OCI-LY7 (cell line): ENCODE measurements at regions of chr1 and their contacts with region 1.

Region 1: DNA sequence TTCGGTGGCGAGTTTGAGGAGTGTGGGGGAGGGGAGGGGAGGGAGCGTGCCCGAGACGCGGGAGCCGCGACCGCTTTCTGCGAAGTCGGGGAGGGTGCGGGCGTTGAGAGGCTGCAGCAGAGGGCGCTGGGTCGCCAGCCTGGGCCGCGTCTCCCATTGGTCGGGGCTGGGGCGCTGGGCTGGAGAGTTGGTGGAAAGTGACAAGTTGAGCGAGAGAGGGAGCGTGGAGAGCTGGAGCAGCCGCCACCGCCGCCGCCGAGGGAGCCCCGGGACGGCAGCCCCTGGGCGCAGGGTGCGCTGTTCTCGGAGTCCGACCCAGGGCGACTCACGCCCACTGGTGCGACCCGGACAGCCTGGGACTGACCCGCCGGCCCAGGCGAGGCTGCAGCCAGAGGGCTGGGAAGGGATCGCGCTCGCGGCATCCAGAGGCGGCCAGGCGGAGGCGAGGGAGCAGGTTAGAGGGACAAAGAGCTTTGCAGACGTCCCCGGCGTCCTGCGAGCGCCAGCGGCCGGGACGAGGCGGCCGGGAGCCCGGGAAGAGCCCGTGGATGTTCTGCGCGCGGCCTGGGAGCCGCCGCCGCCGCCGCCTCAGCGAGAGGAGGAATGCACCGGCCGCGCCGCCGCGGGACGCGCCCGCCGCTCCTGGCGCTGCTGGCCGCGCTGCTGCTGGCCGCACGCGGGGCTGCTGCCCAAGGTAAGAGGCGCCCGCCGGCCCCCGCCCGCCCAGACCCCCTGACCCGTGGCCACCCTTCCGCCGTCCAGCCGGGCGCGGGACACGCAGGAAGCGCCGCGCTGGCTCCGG is at the start of gene ROR1:
- DNase-seq: peak; percentile 73
- H3K4me3 ChIP-seq: peak within 1 kb of the TSS; percentile 67
- H3K27ac ChIP-seq: no peak within 1 kb of the TSS
- H3K4me1 ChIP-seq: peaks cover 29% of the 10 kb centered on the region
- CTCF ChIP-seq: peak; percentile 70
- total RNA-seq, gene ROR1: 0.47 and 0.85 TPM in 2 replicates

Region 2: GRCh38 chr1:63691701-63692425 is 82.2 kb before region 1 on chr1:
- CTCF ChIA-PET with region 1: no interaction called
- POLR2A ChIA-PET with region 1: no interaction called
- intact Hi-C with region 1: loop called (anchors 5 kb)
- DNase-seq: peak; percentile 68
- H3K4me3 ChIP-seq: no peak overlapping the region
- H3K27ac ChIP-seq: no peak overlapping the region
- H3K4me1 ChIP-seq: no peaks in the 10 kb centered on the region
- CTCF ChIP-seq: peak; percentile 89

Region 3: GRCh38 chr1:63753591-63753990 is 20.4 kb before region 1 on chr1:
- CTCF ChIA-PET with region 1: no interaction called
- POLR2A ChIA-PET with region 1: no interaction called
- intact Hi-C with region 1: no loop called
- DNase-seq: no peak
- H3K4me3 ChIP-seq: no peak overlapping the region
- H3K27ac ChIP-seq: no peak overlapping the region
- H3K4me1 ChIP-seq: no peaks in the 10 kb centered on the region
- CTCF ChIP-seq: no peak

Region 4: DNA sequence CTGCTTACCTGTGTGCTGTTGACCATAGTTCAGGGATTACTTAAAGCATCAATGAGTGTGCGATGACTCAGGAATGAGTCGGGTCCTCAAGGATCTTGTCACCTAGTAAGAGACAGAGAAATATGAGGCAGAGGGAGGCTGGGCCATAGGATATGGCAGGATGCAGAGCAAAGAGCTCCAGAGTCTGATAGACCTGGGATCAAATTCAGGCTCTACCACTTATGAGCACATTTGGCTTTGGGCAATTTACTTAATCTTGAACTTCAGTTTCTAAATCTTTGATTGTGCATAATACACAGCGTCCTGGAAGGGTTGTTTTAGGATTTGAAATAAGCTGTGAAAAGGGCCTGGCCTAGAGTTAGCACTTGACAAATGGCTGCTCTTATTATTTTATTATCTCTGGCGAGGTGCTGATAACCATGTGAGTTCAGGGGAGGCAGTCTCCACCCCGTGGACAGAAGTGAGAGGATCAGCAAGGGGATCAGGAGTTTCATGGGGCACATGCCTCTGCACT is 94.3 kb after region 1 on chr1:
- CTCF ChIA-PET with region 1: no interaction called
- POLR2A ChIA-PET with region 1: interaction called, 4 read pairs
- intact Hi-C with region 1: loop called (anchors 5 kb)
- DNase-seq: peak; percentile 24
- H3K4me3 ChIP-seq: no peak overlapping the region
- H3K27ac ChIP-seq: no peak overlapping the region
- H3K4me1 ChIP-seq: no peaks in the 10 kb centered on the region
- CTCF ChIP-seq: peak; percentile 50

Region 5: DNA sequence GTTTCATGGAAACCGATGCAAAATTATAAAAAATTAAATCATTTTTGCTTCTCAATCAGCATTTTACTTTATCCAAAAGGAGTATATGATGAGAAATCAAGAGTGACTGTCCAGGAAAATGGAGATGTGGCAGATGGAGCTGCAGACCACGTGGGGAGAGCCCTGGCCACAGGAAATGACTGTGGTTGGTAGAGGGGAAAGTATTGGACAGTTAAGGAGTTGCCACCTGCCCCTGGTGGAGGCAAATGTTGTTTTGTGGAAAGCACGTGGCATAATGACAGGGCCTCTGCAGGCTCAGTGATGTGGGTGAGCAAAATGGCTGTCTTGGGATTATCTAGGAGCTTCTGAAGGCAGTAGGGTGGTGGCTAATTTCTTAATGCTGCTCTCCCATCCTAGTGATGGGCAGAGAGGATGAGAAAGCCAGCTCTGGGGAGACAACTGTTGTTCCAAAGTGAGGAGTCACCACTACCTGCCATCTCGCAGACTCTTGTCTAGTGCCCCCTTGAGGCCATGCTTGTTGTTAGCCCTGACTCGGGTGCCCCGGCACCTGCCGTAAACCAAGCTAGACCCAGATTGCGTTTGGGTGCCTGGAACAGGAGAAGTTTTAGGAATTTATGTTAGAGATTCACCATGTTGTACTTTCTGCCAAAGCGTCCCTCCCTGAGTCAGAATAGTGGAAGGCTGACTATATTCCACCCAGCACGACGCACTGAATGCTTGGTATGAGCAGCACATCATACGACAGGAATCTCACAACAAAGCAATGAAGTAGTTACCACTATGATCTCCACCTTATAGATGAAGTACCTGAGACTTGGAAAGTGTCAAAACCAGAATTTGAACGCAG is 143.8 kb after region 1 on chr1:
- CTCF ChIA-PET with region 1: no interaction called
- POLR2A ChIA-PET with region 1: no interaction called
- intact Hi-C with region 1: loop called (anchors 1 kb)
- DNase-seq: peak; percentile 51
- H3K4me3 ChIP-seq: no peak overlapping the region
- H3K27ac ChIP-seq: no peak overlapping the region
- H3K4me1 ChIP-seq: no peaks in the 10 kb centered on the region
- CTCF ChIP-seq: peak; percentile 71

Region 6: DNA sequence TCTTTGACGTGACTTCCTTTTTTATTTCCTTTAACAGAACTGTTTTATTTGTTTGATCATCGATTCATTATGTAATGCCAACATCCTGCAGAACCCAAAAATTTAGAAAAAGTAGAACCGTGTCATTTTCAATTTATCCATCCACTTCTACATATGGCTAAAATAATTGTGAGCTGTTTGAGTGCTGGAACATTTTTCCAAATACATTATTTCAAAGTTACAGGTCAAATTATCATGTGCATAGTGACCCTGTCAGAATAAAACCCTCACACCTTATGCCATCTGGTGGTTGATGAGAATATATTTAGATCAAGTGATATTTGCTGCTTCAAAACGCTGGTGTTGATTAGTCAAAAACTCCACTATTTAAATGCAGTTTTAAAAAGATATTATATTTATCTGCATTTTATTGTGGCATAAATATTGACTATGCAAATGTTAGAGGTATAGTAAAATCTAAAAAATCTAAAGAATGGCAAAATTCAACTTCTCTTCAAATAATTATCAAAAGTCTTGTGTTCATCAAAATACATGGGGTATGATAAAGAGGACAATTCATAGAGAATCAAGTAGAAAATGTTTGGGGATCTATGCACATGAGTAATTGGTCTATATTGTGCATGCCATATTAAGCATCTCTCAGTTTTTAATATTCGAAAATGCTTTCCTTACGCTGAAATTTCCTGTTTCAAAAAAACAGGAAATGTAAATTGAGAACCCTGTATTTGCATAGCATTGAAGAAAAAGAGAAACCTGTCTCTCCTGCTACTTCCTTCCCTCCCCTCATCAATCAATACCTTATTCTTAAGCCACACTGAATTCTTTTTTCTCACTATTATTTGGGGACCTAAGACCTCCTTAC is 469.1 kb after region 1 on chr1:
- CTCF ChIA-PET with region 1: no interaction called
- POLR2A ChIA-PET with region 1: no interaction called
- intact Hi-C with region 1: loop called (anchors 10 kb)
- DNase-seq: peak; percentile 37
- H3K4me3 ChIP-seq: no peak overlapping the region
- H3K27ac ChIP-seq: no peak overlapping the region
- H3K4me1 ChIP-seq: peaks cover 10% of the 10 kb centered on the region
- CTCF ChIP-seq: peak; percentile 70